ENCODE measurements at regions of chr15 and their contacts with region 1.

Region 1: GRCh38 chr15:31805090-31805662 is 225.1 kb upstream of the CHRNA7 start:
- DNase-seq: no peak
- H3K4me3 ChIP-seq: no peak overlapping the region
- H3K27ac ChIP-seq: no peak overlapping the region
- H3K4me1 ChIP-seq: no peaks in the 10 kb centered on the region
- H3K27me3 ChIP-seq: no peaks in the 10 kb centered on the region
- CTCF ChIP-seq: no peak
- POLR2A ChIP-seq: no peak

Region 2: DNA sequence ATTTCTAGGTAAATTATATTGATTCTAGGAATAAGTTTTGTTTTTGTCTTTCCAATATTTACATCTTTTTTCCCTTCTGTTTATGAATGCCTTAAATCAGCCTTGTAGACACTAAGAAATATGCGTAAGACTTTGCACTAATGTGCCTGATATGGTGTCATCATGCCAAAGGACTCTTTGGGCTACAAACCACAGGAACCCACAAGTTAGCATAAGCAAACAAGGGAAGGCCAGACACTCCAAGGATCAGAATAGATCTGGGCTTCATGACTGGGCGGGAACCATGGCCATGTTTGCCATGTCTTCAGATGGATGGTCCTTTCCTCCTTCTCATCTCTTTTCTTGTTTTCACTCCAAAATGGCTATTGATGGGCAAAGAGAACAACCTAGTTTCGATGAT is 17.1 kb before region 1 on chr15:
- intact Hi-C with region 1: loop called in 1 of 2 experiments (anchors 2 kb)
- DNase-seq: no peak
- H3K4me3 ChIP-seq: no peak overlapping the region
- H3K27ac ChIP-seq: no peak overlapping the region
- H3K4me1 ChIP-seq: no peaks in the 10 kb centered on the region
- H3K27me3 ChIP-seq: no peaks in the 10 kb centered on the region
- CTCF ChIP-seq: no peak
- POLR2A ChIP-seq: no peak

Region 3: DNA sequence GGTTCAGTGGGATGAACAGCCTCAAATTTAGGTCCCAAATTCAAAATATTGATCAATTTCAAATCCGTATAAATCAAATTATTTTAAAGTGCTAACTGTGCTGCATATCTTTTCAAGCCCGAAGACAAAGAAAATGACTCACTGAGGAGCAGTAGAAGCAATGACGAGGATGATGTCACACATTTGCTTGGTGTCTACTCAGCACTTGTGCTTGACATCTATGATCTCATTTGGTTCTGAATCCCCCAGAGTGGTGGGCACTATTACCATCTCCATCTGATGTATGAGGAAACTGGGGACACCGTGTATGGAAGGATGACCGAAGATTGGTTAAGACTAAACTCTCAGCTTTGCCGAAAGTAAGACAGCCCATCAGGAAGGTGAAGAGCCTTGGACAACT is 88.6 kb after region 1 on chr15:
- intact Hi-C with region 1: no loop called
- DNase-seq: no peak
- H3K4me3 ChIP-seq: no peak overlapping the region
- H3K27ac ChIP-seq: no peak overlapping the region
- H3K4me1 ChIP-seq: no peaks in the 10 kb centered on the region
- H3K27me3 ChIP-seq: peaks cover 5% of the 10 kb centered on the region
- CTCF ChIP-seq: no peak
- POLR2A ChIP-seq: no peak

Region 4: GRCh38 chr15:32033186-32033890 is 228.2 kb after region 1 on chr15:
- intact Hi-C with region 1: no loop called
- DNase-seq: no peak
- H3K4me3 ChIP-seq: no peak overlapping the region
- H3K27ac ChIP-seq: no peak overlapping the region
- H3K4me1 ChIP-seq: peaks cover 0 to 3% of the 10 kb centered on the region in 2 donors
- H3K27me3 ChIP-seq: peaks cover 19% of the 10 kb centered on the region
- CTCF ChIP-seq: no peak
- POLR2A ChIP-seq: no peak